ENCODE measurements at regions of chr2 and their contacts with region 1.

Region 1: GRCh38 chr2:75729861-75730260 is 19.1 kb upstream of the GCFC2 start:
- DNase-seq: peak; percentile 23 to 70
- H3K4me3 ChIP-seq: no peak overlapping the region
- H3K4me1 ChIP-seq: no peaks in the 10 kb centered on the region
- H3K27me3 ChIP-seq: no peaks in the 10 kb centered on the region

Region 2: GRCh38 chr2:76599732-76600368 is 870.0 kb after region 1 on chr2:
- in situ Hi-C with region 1: loop called (anchors 25 kb)
- DNase-seq: peak; percentile 80 to 84
- H3K4me3 ChIP-seq: no peak overlapping the region
- H3K4me1 ChIP-seq: no peaks in the 10 kb centered on the region
- H3K27me3 ChIP-seq: no peaks in the 10 kb centered on the region